ENCODE measurements at regions of chr12 and their contacts with region 1.

Region 1: DNA sequence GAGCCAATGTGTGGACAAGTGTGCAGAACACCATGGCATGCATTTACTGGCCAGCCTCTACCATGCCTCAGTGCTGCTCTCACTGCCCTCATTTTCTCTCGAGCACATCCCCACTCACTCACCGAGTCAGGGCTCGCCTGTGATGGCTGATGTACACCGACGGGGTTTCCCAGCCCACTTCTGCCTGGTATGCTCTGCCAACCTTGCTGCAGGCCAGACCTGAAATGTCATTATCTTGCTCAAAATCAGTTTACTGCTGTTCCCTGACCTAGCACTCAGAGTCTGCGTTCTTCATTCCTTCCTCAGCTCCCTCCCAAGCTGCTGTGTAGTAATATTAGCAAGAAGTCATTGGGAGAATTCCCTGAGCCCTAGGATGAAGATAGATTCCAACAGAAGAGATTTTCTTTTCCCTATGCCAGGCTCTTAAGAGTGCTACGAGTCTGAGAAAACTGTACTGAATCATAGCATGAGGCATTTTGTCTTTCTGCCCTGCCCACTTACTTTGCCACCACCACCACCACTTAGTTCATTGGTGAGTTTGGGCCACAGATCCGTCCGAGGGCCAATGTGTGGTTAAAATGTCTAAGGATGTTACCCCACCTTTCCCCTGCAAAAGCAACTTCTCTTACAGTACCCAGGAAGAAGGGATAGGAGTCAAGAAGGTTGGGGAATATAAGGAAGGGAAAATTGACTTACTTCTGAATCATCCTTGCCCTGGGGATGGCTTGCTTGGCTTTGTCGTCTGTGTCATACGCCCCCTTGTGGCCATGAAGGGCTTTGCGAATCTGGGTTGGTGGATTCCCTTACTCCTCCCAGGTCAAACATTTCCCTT is 51.0 kb downstream of the BMAL2 start:
- DNase-seq: peak; percentile 80
- H3K4me3 ChIP-seq: no peak overlapping the region
- H3K27ac ChIP-seq: no peak overlapping the region
- H3K4me1 ChIP-seq: no peaks in the 10 kb centered on the region
- H3K27me3 ChIP-seq: no peaks in the 10 kb centered on the region
- CTCF ChIP-seq: peak; percentile 89 to 93
- POLR2A ChIP-seq: no peak

Region 2: GRCh38 chr12:26937875-26938700 is 445.6 kb before region 1 on chr12 and contains the starts of genes FGFR1OP2 and INTS13:
- CTCF ChIA-PET with region 1: no interaction called
- POLR2A ChIA-PET with region 1: no interaction called
- dilution Hi-C with region 1: no loop called
- intact Hi-C with region 1: loop called (anchors 1 kb)
- DNase-seq: peak; percentile 98
- H3K4me3 ChIP-seq: peak within 1 kb of the TSS; percentile 49 to 94 (median 91)
- H3K27ac ChIP-seq: peak within 1 kb of the TSS; percentile 82
- H3K4me1 ChIP-seq: peaks cover 49% of the 10 kb centered on the region
- H3K27me3 ChIP-seq: no peaks in the 10 kb centered on the region
- CTCF ChIP-seq: no peak
- POLR2A ChIP-seq: peak; percentile 90
- total RNA-seq, gene FGFR1OP2: 47.3 and 49.3 TPM in 2 replicates
- total RNA-seq, gene INTS13: 25.5 and 35.9 TPM in 2 replicates

Region 3: GRCh38 chr12:27142101-27142721 is 241.4 kb before region 1 on chr12:
- CTCF ChIA-PET with region 1: no interaction called
- POLR2A ChIA-PET with region 1: no interaction called
- dilution Hi-C with region 1: no loop called
- intact Hi-C with region 1: loop called (anchors 2 kb)
- DNase-seq: peak; percentile 83
- H3K4me3 ChIP-seq: no peak overlapping the region
- H3K27ac ChIP-seq: no peak overlapping the region
- H3K4me1 ChIP-seq: peaks cover 2% of the 10 kb centered on the region
- H3K27me3 ChIP-seq: no peaks in the 10 kb centered on the region
- CTCF ChIP-seq: peak; percentile 79 to 86
- POLR2A ChIP-seq: no peak

Region 4: GRCh38 chr12:27332407-27333301 is 51.0 kb before region 1 on chr12 and contains the start of gene BMAL2:
- CTCF ChIA-PET with region 1: interaction called, 11 read pairs
- POLR2A ChIA-PET with region 1: no interaction called
- dilution Hi-C with region 1: no loop called
- intact Hi-C with region 1: loop called (anchors 1 kb)
- DNase-seq: peak; percentile 58
- H3K4me3 ChIP-seq: peak within 1 kb of the TSS; percentile 86 to 94 (median 89)
- H3K27ac ChIP-seq: peak within 1 kb of the TSS; percentile 73
- H3K4me1 ChIP-seq: peaks cover 28% of the 10 kb centered on the region
- H3K27me3 ChIP-seq: no peaks in the 10 kb centered on the region
- CTCF ChIP-seq: no peak
- POLR2A ChIP-seq: peak; percentile 37
- total RNA-seq, gene BMAL2: 30.9 and 33.3 TPM in 2 replicates

Region 5: DNA sequence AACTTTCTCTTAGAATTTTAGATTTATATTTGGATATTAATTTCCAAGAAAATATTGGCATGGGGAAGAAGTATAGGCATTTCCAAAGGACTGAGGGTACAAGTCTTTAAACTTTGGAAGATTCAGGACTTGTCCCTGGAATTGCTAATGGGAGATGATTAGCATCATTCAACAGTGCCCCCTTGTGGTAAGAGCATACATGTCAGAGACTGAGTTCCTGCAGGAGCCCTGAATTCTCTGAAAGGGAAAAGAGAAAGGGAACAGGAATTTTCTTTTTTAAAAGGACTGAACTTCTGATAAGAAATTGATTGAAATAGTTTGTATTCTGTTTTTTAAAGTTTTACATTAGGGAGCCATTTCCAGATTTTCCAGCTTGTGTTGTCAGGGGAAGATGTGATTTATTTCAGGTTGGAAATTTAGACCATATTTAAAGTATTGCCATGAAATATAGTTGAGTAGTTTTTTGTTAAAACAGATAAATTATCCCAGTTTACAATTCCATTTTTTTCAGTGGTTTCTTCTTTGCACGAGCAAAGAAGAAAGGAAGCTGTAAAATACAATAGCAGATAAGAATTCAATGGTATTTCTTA is 268.6 kb after region 1 on chr12:
- CTCF ChIA-PET with region 1: interaction called, 3 read pairs
- POLR2A ChIA-PET with region 1: no interaction called
- dilution Hi-C with region 1: no loop called
- intact Hi-C with region 1: loop called (anchors 1 kb)
- DNase-seq: peak; percentile 86
- H3K4me3 ChIP-seq: no peak overlapping the region
- H3K27ac ChIP-seq: no peak overlapping the region
- H3K4me1 ChIP-seq: peaks cover 8% of the 10 kb centered on the region
- H3K27me3 ChIP-seq: no peaks in the 10 kb centered on the region
- CTCF ChIP-seq: peak; percentile 67 to 69
- POLR2A ChIP-seq: no peak

Region 6: DNA sequence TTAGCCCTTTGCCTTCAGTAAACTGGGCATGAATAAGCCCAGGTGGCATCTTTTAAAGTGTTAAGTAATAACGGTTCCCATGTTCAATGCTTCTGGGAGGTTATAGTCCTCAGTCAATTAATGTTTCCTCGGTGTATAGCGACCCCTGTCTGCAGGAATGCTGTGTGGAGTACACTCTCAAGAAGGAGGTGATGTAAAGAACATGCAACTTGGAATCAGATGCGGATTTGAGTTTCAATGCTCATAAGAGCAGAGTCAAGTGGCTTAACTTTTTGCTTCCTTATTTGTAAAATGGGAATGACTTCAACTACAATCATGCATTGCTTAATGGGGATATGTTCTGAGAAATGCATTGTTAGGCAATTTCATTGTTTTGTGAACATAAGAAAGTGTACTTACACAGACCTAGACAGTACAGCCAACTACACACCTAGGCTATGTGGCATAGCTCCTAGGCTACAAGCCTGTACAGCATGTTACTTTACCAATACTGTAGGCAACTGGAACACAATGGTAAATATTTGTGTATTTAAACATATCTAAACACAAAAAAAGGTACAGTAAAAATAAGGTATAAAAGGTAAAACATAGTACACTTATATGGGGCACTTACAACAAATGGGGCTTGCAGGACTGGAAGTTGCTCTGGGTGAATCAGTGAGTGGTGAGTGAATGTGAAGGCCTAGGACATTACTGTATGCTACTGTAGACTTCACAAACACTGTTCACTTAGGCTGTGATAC is 320.2 kb after region 1 on chr12:
- CTCF ChIA-PET with region 1: no interaction called
- POLR2A ChIA-PET with region 1: no interaction called
- dilution Hi-C with region 1: no loop called
- intact Hi-C with region 1: loop called (anchors 1 kb)
- DNase-seq: peak; percentile 87
- H3K4me3 ChIP-seq: no peak overlapping the region
- H3K27ac ChIP-seq: no peak overlapping the region
- H3K4me1 ChIP-seq: no peaks in the 10 kb centered on the region
- H3K27me3 ChIP-seq: no peaks in the 10 kb centered on the region
- CTCF ChIP-seq: peak; percentile 78 to 79
- POLR2A ChIP-seq: no peak